IMR-90 (cell line): ENCODE measurements at regions of chr1 and their contacts with region 1.

Region 1: DNA sequence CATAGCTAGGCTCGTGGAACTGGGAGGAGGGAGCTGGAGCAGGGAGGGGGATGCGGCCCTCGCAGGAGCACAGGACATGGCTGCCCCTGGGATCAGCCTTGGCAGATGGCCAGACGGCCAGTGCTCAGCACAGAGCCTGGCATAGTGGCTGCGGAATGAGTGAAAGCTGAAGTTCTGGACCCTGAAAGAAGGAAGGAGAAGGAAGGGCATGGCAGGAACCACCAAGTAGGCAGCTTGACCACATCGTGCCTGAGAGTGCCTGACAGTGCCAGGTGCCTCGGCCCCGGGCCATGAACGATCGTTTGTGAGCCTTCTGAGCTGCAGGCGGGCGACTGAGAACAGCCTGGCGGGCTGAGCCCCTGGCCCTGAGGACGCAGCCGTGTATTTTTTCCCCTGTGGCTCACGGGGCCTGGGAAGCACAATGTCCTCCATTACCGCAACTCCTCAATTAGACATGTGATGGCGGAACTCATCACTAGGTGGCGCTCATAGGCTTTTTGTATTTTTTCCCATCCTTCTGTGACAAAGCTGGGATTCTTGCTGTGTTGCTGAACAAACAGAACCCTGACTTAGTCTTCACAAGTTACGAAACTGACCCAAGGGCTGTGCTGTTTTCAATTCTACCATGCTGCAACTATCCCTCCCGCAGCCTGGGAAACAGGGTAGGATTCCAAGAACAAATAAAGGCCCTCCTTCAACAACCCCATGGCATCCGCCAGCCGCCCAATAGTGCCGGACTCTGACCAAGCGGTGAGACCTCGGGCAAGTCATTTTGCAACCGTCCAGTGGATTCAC is 29.9 kb upstream of the TMEM61 start:
- DNase-seq: peak; percentile 84
- ATAC-seq: peak; percentile 95
- H3K4me3 ChIP-seq: no peak overlapping the region
- H3K27ac ChIP-seq: no peak overlapping the region
- H3K4me1 ChIP-seq: peaks cover 8% of the 10 kb centered on the region
- H3K27me3 ChIP-seq: no peaks in the 10 kb centered on the region; the same call in 1 of the 2 replicates
- CTCF ChIP-seq: peak; percentile 84
- POLR2A ChIP-seq: no peak
- RAD21 ChIP-seq: peak; percentile 76

Region 2: DNA sequence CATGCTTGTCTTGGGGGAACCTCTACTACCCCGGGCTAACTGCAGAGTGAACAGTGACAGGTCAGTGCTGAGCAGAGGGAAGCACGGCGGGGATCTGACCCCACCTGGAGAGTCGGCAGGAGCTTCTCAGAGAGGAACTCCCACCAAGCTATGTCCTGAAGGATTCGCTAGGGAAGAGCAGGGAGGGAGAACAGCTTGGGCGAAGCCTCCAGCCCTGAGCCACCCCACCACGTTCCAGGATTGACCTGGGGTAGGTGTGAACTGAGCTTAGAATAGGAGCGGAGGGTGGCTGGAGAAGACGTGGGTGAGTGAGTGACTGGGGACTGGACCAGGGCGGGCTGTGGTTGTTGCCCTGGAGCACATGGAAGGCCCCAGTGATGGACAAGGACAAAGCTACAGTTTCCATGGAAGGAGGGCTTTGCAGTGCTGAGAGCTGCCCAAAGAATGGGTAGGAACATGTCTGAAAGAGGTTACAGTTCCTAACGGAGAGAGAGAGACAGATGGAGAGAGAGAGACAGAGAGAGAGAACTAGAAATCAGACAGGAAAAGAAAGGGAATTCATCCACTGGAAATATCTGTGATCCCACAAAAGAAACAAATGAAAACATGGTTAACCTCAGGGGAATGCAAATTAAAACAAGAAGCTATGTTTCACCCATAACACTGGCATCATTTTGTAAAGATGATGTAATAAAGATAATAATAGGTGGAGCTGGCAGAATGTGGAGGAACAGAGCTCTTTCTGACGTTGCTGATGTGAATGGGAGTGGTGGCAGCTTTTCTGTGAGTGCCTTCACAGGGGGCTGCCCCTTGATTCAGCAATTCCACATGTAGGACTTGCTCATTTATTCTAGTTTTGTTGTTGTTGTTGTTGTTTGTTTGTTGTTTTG is 65.4 kb after region 1 on chr1:
- CTCF ChIA-PET with region 1: interaction called, 27 read pairs
- POLR2A ChIA-PET with region 1: no interaction called
- dilution Hi-C with region 1: no loop called
- in situ Hi-C with region 1: no loop called
- intact Hi-C with region 1: no loop called
- DNase-seq: peak; percentile 56
- ATAC-seq: peak; percentile 54
- H3K4me3 ChIP-seq: no peak overlapping the region
- H3K27ac ChIP-seq: no peak overlapping the region
- H3K4me1 ChIP-seq: peaks cover 11% of the 10 kb centered on the region
- H3K27me3 ChIP-seq: peaks cover 72% of the 10 kb centered on the region
- CTCF ChIP-seq: no peak
- POLR2A ChIP-seq: no peak
- RAD21 ChIP-seq: no peak

Region 3: GRCh38 chr1:55021965-55022546 is 71.5 kb after region 1 on chr1:
- CTCF ChIA-PET with region 1: interaction called, 35 read pairs
- POLR2A ChIA-PET with region 1: no interaction called
- dilution Hi-C with region 1: no loop called
- in situ Hi-C with region 1: no loop called
- intact Hi-C with region 1: loop called (anchors 1 kb)
- DNase-seq: peak; percentile 88
- ATAC-seq: peak; percentile 100
- H3K4me3 ChIP-seq: no peak overlapping the region
- H3K27ac ChIP-seq: no peak overlapping the region
- H3K4me1 ChIP-seq: no peaks in the 10 kb centered on the region
- H3K27me3 ChIP-seq: peaks cover 29% of the 10 kb centered on the region
- CTCF ChIP-seq: peak; percentile 97
- POLR2A ChIP-seq: peak; percentile 40; the same call in 1 of the 2 replicates
- RAD21 ChIP-seq: peak; percentile 87

Region 4: GRCh38 chr1:55039342-55040082 is 88.9 kb after region 1 on chr1 and contains the start of gene PCSK9:
- CTCF ChIA-PET with region 1: no interaction called
- POLR2A ChIA-PET with region 1: no interaction called
- dilution Hi-C with region 1: no loop called
- in situ Hi-C with region 1: no loop called
- intact Hi-C with region 1: no loop called
- DNase-seq: no peak
- ATAC-seq: peak; percentile 86
- H3K4me3 ChIP-seq: no peak within 1 kb of the TSS
- H3K27ac ChIP-seq: no peak within 1 kb of the TSS
- H3K4me1 ChIP-seq: peaks cover 2% of the 10 kb centered on the region; the same call in 1 of the 2 replicates
- H3K27me3 ChIP-seq: peaks cover 85% of the 10 kb centered on the region
- CTCF ChIP-seq: no peak
- POLR2A ChIP-seq: no peak
- RAD21 ChIP-seq: no peak
- total RNA-seq, gene PCSK9: under 0.01 TPM in 2 replicates